ENCODE measurements at regions of chr17 and their contacts with region 1.

Region 1: GRCh38 chr17:64218066-64218465 is 45.0 kb downstream of the TEX2 start:
- DNase-seq: peak; percentile 16
- H3K4me3 Mint-ChIP-seq: no peak overlapping the region
- H3K27ac Mint-ChIP-seq: no peak overlapping the region
- H3K4me1 Mint-ChIP-seq: peaks cover 10% of the 10 kb centered on the region
- H3K27me3 Mint-ChIP-seq: no peaks in the 10 kb centered on the region

Region 2: DNA sequence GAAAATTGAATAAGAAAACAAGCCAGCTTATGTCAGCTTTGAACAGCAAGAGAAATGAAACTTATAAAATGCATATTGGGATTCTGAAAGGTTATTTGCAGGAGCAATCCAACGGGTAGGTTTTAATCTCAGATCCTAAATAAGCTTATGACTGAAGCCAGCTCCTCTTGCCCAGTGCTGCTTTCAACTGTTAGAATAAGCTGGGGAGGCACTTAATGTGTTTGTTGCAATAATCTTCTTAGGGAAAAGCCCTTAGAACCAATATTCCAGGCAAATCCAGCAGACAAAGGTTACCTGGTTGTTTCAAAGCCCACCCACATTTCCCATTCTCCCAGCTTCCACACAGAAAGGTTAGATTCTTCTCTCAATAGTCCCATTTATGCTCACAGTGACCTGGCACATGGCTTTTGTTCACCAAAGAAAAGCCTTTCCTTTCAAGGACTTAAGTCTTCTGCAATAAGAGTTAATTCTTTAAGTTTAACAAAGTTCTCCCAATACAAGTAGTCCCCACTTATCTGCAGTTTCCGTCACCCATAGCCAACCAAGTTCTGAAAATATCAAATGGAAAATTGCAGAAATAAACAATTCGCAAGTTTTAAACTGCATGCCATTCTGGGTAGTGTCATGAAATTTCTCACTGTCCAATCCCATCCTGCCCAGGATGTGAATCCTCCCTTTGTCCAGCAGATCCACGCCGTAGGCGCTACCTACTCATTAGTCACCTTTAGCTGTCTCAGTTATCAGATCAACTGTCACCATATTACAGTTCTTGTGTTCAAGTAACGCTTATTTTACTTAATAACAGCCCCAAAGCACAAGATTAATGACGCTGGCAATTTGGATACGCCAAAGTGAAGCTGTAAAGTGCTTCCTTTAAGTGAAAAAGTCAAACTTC is 39.1 kb after region 1 on chr17:
- CTCF ChIA-PET with region 1: no interaction called
- POLR2A ChIA-PET with region 1: interaction called, 10 read pairs
- DNase-seq: no peak
- H3K4me3 Mint-ChIP-seq: no peak overlapping the region
- H3K27ac Mint-ChIP-seq: no peak overlapping the region
- H3K4me1 Mint-ChIP-seq: peaks cover 24% of the 10 kb centered on the region
- H3K27me3 Mint-ChIP-seq: no peaks in the 10 kb centered on the region

Measured in activated CD4-positive, alpha-beta T cell treated with anti-CD3 and anti-CD28 coated beads, Interleukin-2, amount 10 ng/mL, durations not matched to agents 7 days and 5 days (primary cell).